ENCODE measurements at regions of chr6 and their contacts with region 1.

Region 1: DNA sequence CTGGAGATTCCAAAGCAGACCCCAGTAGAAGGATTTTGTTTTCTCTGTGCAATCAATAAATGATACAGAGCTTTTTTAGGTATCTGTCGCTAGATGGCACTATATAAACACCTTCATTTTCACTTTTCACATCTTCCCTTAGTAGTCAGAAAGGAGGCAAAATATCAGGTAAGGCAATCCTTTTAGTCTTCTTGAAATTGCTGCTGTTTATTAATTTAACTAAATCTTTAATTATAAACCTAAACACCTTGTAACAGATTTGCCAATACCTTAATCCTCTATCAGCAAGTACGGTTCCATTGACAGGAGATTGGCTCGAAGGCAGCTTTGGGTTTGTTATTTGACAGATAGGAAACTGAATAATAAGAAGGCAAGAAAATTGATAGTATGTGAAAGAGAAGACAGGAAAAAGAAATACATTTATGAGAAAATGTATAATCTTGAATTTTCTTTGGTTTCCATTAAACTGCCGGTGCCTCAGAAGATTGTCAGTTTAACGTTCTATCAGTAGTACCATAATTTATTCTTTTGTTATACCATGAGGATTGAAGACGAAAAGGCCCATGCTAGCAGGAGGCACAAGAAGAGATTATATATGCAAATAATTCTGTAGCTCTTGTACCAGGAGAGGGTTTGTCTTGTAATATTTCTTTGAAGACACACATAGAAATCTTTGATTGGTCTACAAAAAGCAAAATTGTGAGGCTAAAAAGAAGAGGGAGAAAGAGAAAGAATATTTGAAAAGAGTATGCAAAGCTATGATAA is 23.5 kb upstream of the IBTK start:
- DNase-seq: no peak
- H3K4me3 ChIP-seq: no peak overlapping the region
- H3K27ac ChIP-seq: no peak overlapping the region
- H3K4me1 ChIP-seq: peaks cover 0 to 7% (median 0%) of the 10 kb centered on the region in 4 experiments; a peak in 1 of 7 replicates
- H3K27me3 ChIP-seq: no peaks in the 10 kb centered on the region
- CTCF ChIP-seq: peak in 2 of 3 experiments; percentile 36 to 55; a peak in 2 of 4 replicates
- EP300 ChIP-seq: no peak
- POLR2A ChIP-seq: no peak
- RAD21 ChIP-seq: peak; percentile 75 to 78

Region 2: GRCh38 chr6:82247634-82248232 is 23.3 kb before region 1 on chr6 and contains the start of gene IBTK:
- CTCF ChIA-PET with region 1: interaction called, 10 read pairs
- POLR2A ChIA-PET with region 1: no interaction called
- DNase-seq: peak; percentile 84 to 98
- H3K4me3 ChIP-seq: peak within 1 kb of the TSS; percentile 84 to 95 (median 89)
- H3K27ac ChIP-seq: peak within 1 kb of the TSS; percentile 76; the same call in 1 of the 2 replicates
- H3K4me1 ChIP-seq: peaks cover 0 to 5% (median 4%) of the 10 kb centered on the region in 4 experiments; a peak in 3 of 7 replicates
- H3K27me3 ChIP-seq: no peaks in the 10 kb centered on the region
- CTCF ChIP-seq: no peak
- EP300 ChIP-seq: no peak
- POLR2A ChIP-seq: peak in 1 of 2 experiments; percentile 77; a peak in 2 of 3 replicates
- RAD21 ChIP-seq: no peak
- total RNA-seq, gene IBTK: 23.1 and 24.2 TPM in 2 replicates

Region 3: GRCh38 chr6:82257088-82257772 is 13.8 kb before region 1 on chr6:
- CTCF ChIA-PET with region 1: interaction called, 15 read pairs
- POLR2A ChIA-PET with region 1: no interaction called
- DNase-seq: no peak
- H3K4me3 ChIP-seq: no peak overlapping the region
- H3K27ac ChIP-seq: no peak overlapping the region
- H3K4me1 ChIP-seq: peaks cover 0 to 9% (median 2%) of the 10 kb centered on the region in 4 experiments; a peak in 2 of 7 replicates
- H3K27me3 ChIP-seq: no peaks in the 10 kb centered on the region
- CTCF ChIP-seq: no peak
- EP300 ChIP-seq: no peak
- POLR2A ChIP-seq: no peak
- RAD21 ChIP-seq: 0 out of 4 replicates have a peak, but pooled peaks of 1 of the 2 experiments have one; percentile 8

Region 4: DNA sequence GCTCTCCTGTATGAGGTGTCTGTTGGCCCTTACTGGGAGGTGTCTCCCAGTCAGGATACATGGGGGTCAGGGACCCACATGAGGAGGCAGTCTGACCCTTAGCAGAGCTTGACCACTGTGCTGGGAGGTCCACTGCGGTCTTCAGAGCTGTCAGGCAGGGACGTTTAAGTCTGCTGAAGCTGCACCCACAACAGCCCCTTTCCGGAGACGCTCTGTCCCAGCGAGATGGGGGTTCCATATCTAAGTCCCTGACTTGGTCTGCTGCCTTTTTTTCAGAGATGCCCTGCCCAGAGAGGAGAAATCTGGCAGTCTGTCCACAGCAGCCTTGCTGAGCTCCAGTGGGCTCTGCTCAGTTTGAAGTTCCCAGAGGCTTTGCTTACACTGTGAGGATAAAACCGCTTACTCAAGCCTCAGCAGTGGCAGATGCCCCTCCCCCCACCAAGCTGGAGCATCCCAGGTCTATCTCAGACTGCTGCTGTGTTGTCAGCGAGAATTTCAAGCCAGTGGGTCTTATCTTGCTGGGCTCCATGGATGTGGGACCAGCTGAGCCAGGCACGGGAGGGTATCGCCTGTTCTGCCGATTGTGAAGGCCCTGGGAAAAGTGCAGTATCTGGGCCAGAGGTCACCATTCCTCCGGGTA is 12.8 kb after region 1 on chr6:
- CTCF ChIA-PET with region 1: interaction called, 33 read pairs
- POLR2A ChIA-PET with region 1: no interaction called
- DNase-seq: peak in 1 of 2 experiments; percentile 50
- H3K4me3 ChIP-seq: no peak overlapping the region
- H3K27ac ChIP-seq: no peak overlapping the region
- H3K4me1 ChIP-seq: peaks cover 0 to 6% (median 0%) of the 10 kb centered on the region in 4 experiments; a peak in 3 of 7 replicates
- H3K27me3 ChIP-seq: no peaks in the 10 kb centered on the region
- CTCF ChIP-seq: no peak
- EP300 ChIP-seq: no peak
- POLR2A ChIP-seq: no peak
- RAD21 ChIP-seq: no peak

Region 5: DNA sequence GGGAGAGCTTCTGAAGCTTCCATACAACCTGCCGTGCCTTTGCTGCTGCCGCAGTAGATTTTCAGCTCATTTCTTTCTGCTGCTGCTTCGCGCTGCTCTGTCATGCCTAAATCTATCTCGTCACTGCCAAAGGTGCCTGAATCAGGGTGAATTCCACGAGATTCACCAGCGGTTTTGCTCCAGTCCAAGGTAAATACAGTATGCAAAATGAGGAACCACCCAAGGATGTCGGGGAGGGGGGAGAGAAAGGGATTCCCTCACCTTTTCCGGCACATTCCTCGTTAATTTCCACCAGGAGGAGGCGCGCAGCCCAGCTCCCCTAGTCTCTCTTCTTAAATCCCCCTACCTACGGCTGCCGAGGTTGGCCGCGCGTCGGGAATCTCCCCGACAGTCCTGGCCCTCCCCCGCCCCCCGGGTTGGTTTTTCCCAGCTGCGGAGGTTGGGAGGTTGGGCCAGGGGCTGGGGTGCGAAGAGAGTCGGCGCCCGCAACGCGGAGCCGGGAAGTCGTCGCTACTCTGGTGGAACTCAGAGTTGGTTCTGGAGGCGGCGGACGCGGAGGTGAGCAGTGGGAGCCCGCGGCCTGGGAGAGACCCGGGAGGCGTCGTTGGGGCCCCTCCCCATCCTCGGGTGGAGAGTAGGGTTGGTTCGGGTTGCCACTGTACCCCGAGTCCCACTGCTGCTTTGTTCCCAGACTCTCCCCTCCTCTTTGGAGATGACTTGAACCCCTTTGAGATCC is 92.5 kb after region 1 on chr6 and contains the start of gene TPBG:
- CTCF ChIA-PET with region 1: interaction called, 21 read pairs
- POLR2A ChIA-PET with region 1: no interaction called
- DNase-seq: peak; percentile 82 to 90
- H3K4me3 ChIP-seq: peak within 1 kb of the TSS; percentile 70 to 97 (median 80)
- H3K27ac ChIP-seq: peak within 1 kb of the TSS; percentile 57; the same call in 1 of the 2 replicates
- H3K4me1 ChIP-seq: peaks cover 5 to 16% (median 7%) of the 10 kb centered on the region in 4 experiments
- H3K27me3 ChIP-seq: no peaks in the 10 kb centered on the region; a peak in 1 of 7 replicates
- CTCF ChIP-seq: peak; percentile 51 to 71 (median 65); a peak in 3 of 4 replicates
- EP300 ChIP-seq: peak in 1 of 2 experiments; percentile 95; a peak in 2 of 3 replicates
- POLR2A ChIP-seq: peak in 1 of 2 experiments; percentile 55; a peak in 1 of 3 replicates
- RAD21 ChIP-seq: peak; percentile 58 to 61
- total RNA-seq, gene TPBG: 28.4 and 29.5 TPM in 2 replicates

Region 6: DNA sequence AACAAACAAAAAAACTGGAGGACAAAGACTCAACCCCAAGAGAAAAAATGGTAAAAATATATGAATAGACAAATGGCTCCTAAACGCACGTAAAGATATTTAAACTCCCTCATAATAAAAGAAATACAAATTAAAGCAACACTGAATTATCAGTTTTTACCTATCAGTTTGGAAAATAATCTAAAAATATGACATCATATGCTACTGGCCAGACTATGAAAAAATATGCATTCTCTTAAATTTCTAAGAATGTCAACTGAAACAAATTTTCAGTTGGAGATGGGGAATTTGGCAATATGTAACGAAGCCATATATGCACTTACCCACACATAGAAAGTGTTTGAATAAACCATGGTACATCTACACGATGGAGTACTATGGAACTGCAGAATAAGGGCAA is 270.2 kb after region 1 on chr6:
- CTCF ChIA-PET with region 1: interaction called, 11 read pairs
- POLR2A ChIA-PET with region 1: no interaction called
- DNase-seq: no peak
- H3K4me3 ChIP-seq: no peak overlapping the region
- H3K27ac ChIP-seq: no peak overlapping the region
- H3K4me1 ChIP-seq: no peaks in the 10 kb centered on the region
- H3K27me3 ChIP-seq: no peaks in the 10 kb centered on the region
- CTCF ChIP-seq: no peak
- EP300 ChIP-seq: no peak
- POLR2A ChIP-seq: no peak
- RAD21 ChIP-seq: no peak

Region 7: DNA sequence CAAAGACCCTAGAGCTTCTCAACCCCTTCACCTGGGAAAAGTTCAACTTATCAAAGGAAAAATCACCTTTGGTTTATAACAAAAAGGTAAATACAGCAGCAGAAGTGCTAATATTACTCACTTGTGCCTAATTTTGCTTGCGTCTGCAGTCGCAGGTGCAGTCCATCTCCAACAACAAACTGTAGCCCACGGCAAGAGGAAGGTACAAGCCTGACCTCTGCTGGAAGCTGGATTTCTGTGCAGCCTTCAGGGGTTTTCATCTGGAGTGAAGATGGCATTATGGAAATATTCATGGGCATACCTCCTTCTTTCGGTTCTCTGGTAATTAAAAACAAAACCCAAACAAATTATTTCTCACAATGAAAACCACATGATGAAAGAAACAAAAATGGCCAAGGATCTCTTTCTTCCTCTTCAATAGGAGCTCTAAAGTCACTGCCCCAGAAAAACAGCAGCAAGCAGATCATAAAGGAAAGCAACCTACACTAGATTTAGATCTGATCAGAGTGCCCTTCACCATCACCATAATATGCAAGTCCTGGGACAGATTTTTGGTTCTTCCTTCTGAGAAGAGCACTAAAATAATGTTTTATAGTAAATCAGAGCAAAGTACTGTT is 786.8 kb after region 1 on chr6:
- CTCF ChIA-PET with region 1: interaction called, 30 read pairs
- POLR2A ChIA-PET with region 1: no interaction called
- DNase-seq: peak in 1 of 2 experiments; percentile 51
- H3K4me3 ChIP-seq: no peak overlapping the region
- H3K27ac ChIP-seq: no peak overlapping the region
- H3K4me1 ChIP-seq: no peaks in the 10 kb centered on the region
- H3K27me3 ChIP-seq: no peaks in the 10 kb centered on the region
- CTCF ChIP-seq: peak; percentile 63 to 83 (median 70)
- EP300 ChIP-seq: no peak
- POLR2A ChIP-seq: no peak
- RAD21 ChIP-seq: peak; percentile 80 to 86